Panc1 (cell line): ENCODE measurements at regions of chr10 and their contacts with region 1.

Region 1: GRCh38 chr10:119588071-119588470 is 8.7 kb downstream of the TIAL1 start:
- DNase-seq: no peak
- ATAC-seq: no peak
- H3K4me3 ChIP-seq: no peak overlapping the region
- H3K27ac ChIP-seq: no peak overlapping the region
- H3K4me1 ChIP-seq: peaks cover 17% of the 10 kb centered on the region
- H3K27me3 ChIP-seq: no peaks in the 10 kb centered on the region
- CTCF ChIP-seq: no peak

Region 2: GRCh38 chr10:119517235-119518141 is 70.6 kb before region 1 on chr10:
- CTCF ChIA-PET with region 1: no interaction called
- POLR2A ChIA-PET with region 1: no interaction called
- in situ Hi-C with region 1: no loop called
- intact Hi-C with region 1: no loop called
- DNase-seq: no peak
- ATAC-seq: no peak
- H3K4me3 ChIP-seq: no peak overlapping the region
- H3K27ac ChIP-seq: no peak overlapping the region
- H3K4me1 ChIP-seq: no peaks in the 10 kb centered on the region
- H3K27me3 ChIP-seq: no peaks in the 10 kb centered on the region
- CTCF ChIP-seq: no peak

Region 3: DNA sequence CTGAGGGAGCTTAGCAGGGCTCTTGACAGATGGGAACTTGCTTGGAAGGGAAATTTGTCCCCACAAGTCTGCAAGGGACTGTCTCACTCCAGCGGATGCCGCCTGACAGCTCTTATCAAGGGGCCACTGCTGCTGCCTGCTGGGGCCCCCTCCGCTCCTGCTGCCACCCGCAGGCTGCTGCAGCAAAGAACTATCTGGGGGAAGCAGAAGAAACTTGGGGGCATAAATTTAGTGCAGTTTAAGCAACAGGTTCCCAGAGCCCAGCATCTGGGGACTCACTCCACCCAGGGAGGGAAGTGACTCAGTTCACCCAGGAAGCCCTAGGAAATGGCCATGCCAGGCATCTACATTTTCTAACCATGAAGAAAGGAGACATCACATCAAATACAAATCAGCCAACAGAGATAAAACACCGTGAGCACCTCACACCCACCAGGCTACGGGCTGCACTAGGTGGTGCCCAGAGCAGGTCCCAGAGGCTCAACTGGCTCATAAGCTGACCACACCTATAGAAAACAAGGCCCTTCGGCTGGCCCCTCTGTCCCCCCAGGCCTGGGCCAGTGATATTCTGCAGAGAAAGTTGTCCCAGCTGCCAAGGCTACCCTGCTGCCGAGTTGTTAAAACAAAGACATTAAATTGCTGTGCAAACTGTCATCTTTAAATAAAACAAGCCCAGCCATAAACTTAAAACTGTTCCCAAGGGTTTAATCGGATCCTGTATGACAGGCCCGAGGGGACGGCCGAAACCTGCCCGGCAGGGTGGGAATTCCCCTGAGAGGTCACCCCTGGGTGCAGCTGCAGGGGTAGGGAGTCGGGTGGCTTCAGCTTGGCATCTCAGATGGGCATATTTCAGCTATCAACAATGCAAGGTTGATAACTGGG is 49.2 kb before region 1 on chr10:
- CTCF ChIA-PET with region 1: no interaction called
- POLR2A ChIA-PET with region 1: interaction called, 16 read pairs
- in situ Hi-C with region 1: no loop called
- intact Hi-C with region 1: no loop called
- DNase-seq: no peak
- ATAC-seq: no peak
- H3K4me3 ChIP-seq: no peak overlapping the region
- H3K27ac ChIP-seq: peak overlapping the region; percentile 67
- H3K4me1 ChIP-seq: peaks cover 59% of the 10 kb centered on the region
- H3K27me3 ChIP-seq: no peaks in the 10 kb centered on the region
- CTCF ChIP-seq: no peak; the same call in 1 of the 2 replicates

Region 4: GRCh38 chr10:119575506-119575905 is 12.6 kb before region 1 on chr10:
- CTCF ChIA-PET with region 1: no interaction called
- POLR2A ChIA-PET with region 1: interaction called, 12 read pairs
- in situ Hi-C with region 1: no loop called
- intact Hi-C with region 1: no loop called
- DNase-seq: no peak
- ATAC-seq: peak; percentile 67; the same call in 1 of the 2 replicates
- H3K4me3 ChIP-seq: no peak overlapping the region
- H3K27ac ChIP-seq: no peak overlapping the region
- H3K4me1 ChIP-seq: no peaks in the 10 kb centered on the region
- H3K27me3 ChIP-seq: no peaks in the 10 kb centered on the region
- CTCF ChIP-seq: no peak

Region 5: GRCh38 chr10:119652293-119652760 is 64.3 kb after region 1 on chr10:
- CTCF ChIA-PET with region 1: no interaction called
- POLR2A ChIA-PET with region 1: interaction called, 13 read pairs
- in situ Hi-C with region 1: no loop called
- intact Hi-C with region 1: no loop called
- DNase-seq: no peak
- ATAC-seq: peak; percentile 39; the same call in 1 of the 2 replicates
- H3K4me3 ChIP-seq: peak overlapping the region; percentile 70 to 90
- H3K27ac ChIP-seq: peak overlapping the region; percentile 99
- H3K4me1 ChIP-seq: peaks cover 46% of the 10 kb centered on the region
- H3K27me3 ChIP-seq: no peaks in the 10 kb centered on the region
- CTCF ChIP-seq: no peak